Activated CD8-positive, alpha-beta memory T cell treated with anti-CD3 and anti-CD28 coated beads, Interleukin-2, amount 10 ng/mL, durations not matched to agents 7 days and 5 days (primary cell): ENCODE measurements at regions of chr12 and their contacts with region 1.

Region 1: GRCh38 chr12:3275171-3276041 is 198.2 kb downstream of the TSPAN9 start:
- DNase-seq: peak; percentile 74
- ATAC-seq: peak; percentile 87
- H3K4me3 Mint-ChIP-seq: no peak overlapping the region
- H3K27ac Mint-ChIP-seq: no peak overlapping the region
- H3K4me1 Mint-ChIP-seq: no peaks in the 10 kb centered on the region
- H3K27me3 Mint-ChIP-seq: peaks cover 18% of the 10 kb centered on the region

Region 2: GRCh38 chr12:3073438-3074250 is 201.8 kb before region 1 on chr12:
- CTCF ChIA-PET with region 1: interaction called, 40 read pairs
- DNase-seq: peak; percentile 87
- ATAC-seq: peak; percentile 48
- H3K4me3 Mint-ChIP-seq: no peak overlapping the region
- H3K27ac Mint-ChIP-seq: peak overlapping the region; percentile 36
- H3K4me1 Mint-ChIP-seq: peaks cover 11% of the 10 kb centered on the region
- H3K27me3 Mint-ChIP-seq: peaks cover 28% of the 10 kb centered on the region

Region 3: DNA sequence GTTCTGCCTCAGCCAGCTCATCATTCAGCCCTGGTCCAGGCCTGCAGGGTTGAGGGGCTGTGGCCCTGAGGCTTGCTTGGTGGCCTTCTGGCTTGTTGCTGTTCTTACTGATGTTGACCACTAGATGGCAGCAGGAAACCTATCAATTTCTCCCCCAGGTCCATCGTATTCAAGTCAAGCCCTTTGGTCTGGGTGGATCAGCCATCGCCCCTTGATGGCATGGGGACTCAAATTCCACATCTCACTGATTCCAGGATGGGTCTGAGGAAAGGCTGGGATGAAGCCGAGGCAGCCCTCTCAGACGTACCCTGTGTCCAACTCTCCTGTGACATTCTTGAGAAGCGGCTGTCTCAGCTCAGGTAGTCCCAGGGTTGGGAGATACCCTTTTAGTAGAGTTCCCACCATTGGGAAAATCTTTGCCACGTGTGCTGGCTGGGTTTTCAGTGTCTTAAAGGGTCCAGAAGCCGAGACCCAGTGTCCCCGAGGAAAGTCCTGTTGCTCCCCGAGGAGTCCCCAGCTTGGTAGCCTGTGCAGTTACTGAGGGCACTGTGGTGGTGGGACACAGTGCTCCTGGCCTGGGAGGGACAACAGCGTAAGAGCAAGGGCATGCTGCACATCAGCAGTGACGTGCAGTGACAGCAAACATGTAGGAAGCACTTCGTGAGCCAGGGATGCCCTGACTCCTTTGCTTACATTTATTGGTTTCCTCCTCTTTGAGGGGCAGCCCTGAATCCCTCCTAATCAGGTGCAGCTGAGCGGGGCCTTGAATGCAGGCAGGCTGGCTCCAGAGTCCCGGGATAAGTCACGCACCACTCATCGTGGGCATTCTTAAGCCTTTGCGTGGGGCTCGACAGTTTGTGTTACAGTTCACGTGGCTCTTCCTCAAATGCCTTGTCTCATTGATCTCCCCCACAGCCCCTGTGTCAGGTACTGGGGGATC is 139.6 kb before region 1 on chr12:
- CTCF ChIA-PET with region 1: interaction called, 13 read pairs
- DNase-seq: peak; percentile 56
- ATAC-seq: peak; percentile 73
- H3K4me3 Mint-ChIP-seq: no peak overlapping the region
- H3K27ac Mint-ChIP-seq: no peak overlapping the region
- H3K4me1 Mint-ChIP-seq: no peaks in the 10 kb centered on the region
- H3K27me3 Mint-ChIP-seq: peaks cover 26% of the 10 kb centered on the region

Region 4: DNA sequence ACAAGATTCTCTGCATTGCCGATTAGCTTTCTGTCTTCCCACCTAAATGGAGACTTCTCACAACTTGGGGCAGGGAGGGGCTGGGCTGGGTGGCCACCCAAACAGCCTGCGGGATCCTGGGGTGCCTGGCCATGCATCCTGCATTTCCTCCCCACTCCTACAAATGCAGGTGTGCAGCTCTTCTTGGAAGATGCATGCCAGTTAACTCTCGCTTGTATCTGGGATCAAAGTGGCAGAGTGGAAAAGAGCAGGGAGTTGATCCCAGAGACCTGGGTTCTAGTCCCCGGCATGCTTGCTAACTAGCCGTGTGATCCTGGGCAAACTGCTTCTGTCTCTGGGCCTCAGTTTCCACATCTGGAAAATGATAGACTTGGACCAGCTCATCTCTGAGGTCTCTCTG is 61.6 kb before region 1 on chr12:
- CTCF ChIA-PET with region 1: no interaction called
- DNase-seq: no peak
- ATAC-seq: no peak
- H3K4me3 Mint-ChIP-seq: no peak overlapping the region
- H3K27ac Mint-ChIP-seq: no peak overlapping the region
- H3K4me1 Mint-ChIP-seq: no peaks in the 10 kb centered on the region
- H3K27me3 Mint-ChIP-seq: peaks cover 6% of the 10 kb centered on the region

Region 5: GRCh38 chr12:3263939-3264922 is 11.2 kb before region 1 on chr12:
- CTCF ChIA-PET with region 1: interaction called, 14 read pairs
- DNase-seq: no peak
- ATAC-seq: no peak
- H3K4me3 Mint-ChIP-seq: no peak overlapping the region
- H3K27ac Mint-ChIP-seq: no peak overlapping the region
- H3K4me1 Mint-ChIP-seq: no peaks in the 10 kb centered on the region
- H3K27me3 Mint-ChIP-seq: no peaks in the 10 kb centered on the region